GM12878 (cell line): ENCODE measurements at regions of chr2 and their contacts with region 1.

Region 1: DNA sequence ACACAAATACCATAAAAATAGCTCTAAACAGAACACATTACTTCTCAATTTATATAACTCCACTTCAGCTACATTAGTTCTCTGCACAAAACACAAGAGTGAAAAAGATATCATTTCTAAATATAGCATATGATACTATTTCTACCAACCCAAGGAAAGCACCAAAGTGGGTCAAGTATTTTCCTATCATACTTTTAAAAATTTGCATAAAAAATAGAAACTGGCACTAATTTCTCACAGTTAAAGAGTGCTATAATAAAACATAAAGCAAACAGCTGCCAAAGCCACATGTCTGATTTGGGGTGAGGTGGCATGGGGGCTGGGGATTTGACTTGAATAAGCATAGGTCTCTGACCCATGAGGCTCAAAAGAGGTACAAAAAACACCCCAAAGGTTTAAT is 61.5 kb downstream of the BARD1 start:
- DNase-seq: peak; percentile 40
- ATAC-seq: peak; percentile 78
- H3K4me3 ChIP-seq: no peak overlapping the region
- H3K27ac ChIP-seq: no peak overlapping the region
- H3K4me1 ChIP-seq: no peaks in the 10 kb centered on the region
- H3K27me3 ChIP-seq: no peaks in the 10 kb centered on the region
- CTCF ChIP-seq: no peak
- EP300 ChIP-seq: peak in 1 of 2 experiments; percentile 47; a peak in 1 of 4 replicates
- POLR2A ChIP-seq: no peak
- RAD21 ChIP-seq: no peak

Region 2: GRCh38 chr2:214261683-214262082 is 486.3 kb before region 1 on chr2:
- CTCF ChIA-PET with region 1: no interaction called
- POLR2A ChIA-PET with region 1: no interaction called
- RAD21 ChIA-PET with region 1: no interaction called
- SMC1A ChIA-PET with region 1: no interaction called
- in situ Hi-C with region 1: no loop called
- intact Hi-C with region 1: no loop called
- DNase-seq: no peak
- ATAC-seq: no peak
- H3K4me3 ChIP-seq: no peak overlapping the region
- H3K27ac ChIP-seq: no peak overlapping the region
- H3K4me1 ChIP-seq: no peaks in the 10 kb centered on the region
- H3K27me3 ChIP-seq: no peaks in the 10 kb centered on the region
- CTCF ChIP-seq: no peak
- EP300 ChIP-seq: no peak
- POLR2A ChIP-seq: no peak
- RAD21 ChIP-seq: no peak

Region 3: DNA sequence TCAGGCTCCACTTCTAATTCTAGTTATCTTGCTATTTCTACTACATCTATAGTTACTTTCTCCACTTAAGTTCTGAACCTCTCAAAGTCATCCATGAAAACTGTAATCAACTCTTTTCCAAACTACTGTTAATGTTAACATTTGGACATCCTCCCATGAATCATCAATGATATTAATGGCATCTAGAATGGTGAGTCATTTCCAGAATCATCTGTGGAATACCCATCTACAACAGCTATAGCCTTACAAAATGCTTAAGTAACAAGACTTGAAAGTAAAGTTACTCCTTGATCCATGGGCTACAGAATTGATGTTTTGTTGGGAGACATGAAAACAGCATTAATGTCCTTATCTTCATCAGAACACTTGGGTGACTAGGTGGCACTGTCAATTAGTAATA is 26.1 kb after region 1 on chr2:
- CTCF ChIA-PET with region 1: interaction called, 4 read pairs
- POLR2A ChIA-PET with region 1: no interaction called
- RAD21 ChIA-PET with region 1: no interaction called
- SMC1A ChIA-PET with region 1: interaction called, 10 read pairs
- in situ Hi-C with region 1: no loop called
- intact Hi-C with region 1: no loop called
- DNase-seq: no peak
- ATAC-seq: no peak
- H3K4me3 ChIP-seq: no peak overlapping the region
- H3K27ac ChIP-seq: no peak overlapping the region
- H3K4me1 ChIP-seq: no peaks in the 10 kb centered on the region
- H3K27me3 ChIP-seq: no peaks in the 10 kb centered on the region
- CTCF ChIP-seq: no peak
- EP300 ChIP-seq: no peak
- POLR2A ChIP-seq: no peak
- RAD21 ChIP-seq: no peak